ENCODE measurements at regions of chr6 and their contacts with region 1.

Region 1: GRCh38 chr6:31739639-31740396 is at the start of gene MSH5:
- DNase-seq: peak; percentile 98
- H3K4me3 Mint-ChIP-seq: peak within 1 kb of the TSS; percentile 99
- H3K27ac Mint-ChIP-seq: peak within 1 kb of the TSS; percentile 95
- H3K4me1 Mint-ChIP-seq: peaks cover 52% of the 10 kb centered on the region
- H3K27me3 Mint-ChIP-seq: no peaks in the 10 kb centered on the region
- total RNA-seq, gene MSH5: 60.1 to 63.2 TPM

Region 2: GRCh38 chr6:31122791-31123706 is 616.8 kb before region 1 on chr6:
- CTCF ChIA-PET with region 1: no interaction called
- POLR2A ChIA-PET with region 1: no interaction called
- DNase-seq: no peak
- H3K4me3 Mint-ChIP-seq: no peak overlapping the region
- H3K27ac Mint-ChIP-seq: no peak overlapping the region
- H3K4me1 Mint-ChIP-seq: no peaks in the 10 kb centered on the region
- H3K27me3 Mint-ChIP-seq: peaks cover 15% of the 10 kb centered on the region

Region 3: DNA sequence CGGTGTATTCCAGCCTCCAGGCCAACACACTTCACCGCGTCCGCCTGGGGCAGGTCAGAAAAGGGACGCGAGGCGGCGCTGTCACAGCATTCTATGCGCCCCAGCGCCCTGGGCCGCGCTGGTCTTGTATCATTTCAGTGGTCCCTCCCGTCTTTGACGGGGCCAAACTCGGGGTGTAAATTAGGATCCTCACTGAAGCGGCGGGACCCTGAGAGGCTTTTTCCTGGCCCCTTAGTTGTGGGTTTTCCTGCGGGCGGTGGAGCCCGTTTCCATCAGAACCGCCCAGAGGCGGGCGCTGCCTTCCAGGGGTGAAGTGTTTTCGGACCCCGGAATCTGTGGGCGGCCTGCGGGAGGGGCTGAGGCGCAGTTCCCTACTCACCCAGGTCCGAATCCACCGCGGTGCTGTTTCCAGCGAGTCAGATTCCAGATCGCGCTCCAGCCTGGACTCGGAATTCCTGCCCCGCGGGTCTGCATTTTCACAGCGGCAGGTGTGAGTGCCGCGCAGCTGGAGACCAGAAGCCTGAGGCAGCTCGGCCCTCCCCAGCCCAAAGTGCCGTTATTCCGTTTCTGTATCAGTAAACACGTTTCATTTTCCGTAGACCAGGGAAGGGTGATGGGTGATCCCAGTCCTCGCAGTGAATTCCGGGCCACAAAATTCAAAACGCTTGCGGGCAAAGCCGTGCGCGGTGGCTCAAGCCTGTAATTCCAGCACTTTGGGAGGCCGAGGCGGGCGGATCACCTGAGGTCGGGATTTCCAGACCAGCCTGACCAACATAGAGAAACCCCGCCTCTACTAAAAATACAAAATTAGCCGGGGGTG is 245.7 kb before region 1 on chr6:
- CTCF ChIA-PET with region 1: interaction called, 3 read pairs
- POLR2A ChIA-PET with region 1: interaction called, 14 read pairs
- DNase-seq: peak; percentile 85
- H3K4me3 Mint-ChIP-seq: peak overlapping the region; percentile 81
- H3K27ac Mint-ChIP-seq: peak overlapping the region; percentile 78
- H3K4me1 Mint-ChIP-seq: peaks cover 60% of the 10 kb centered on the region
- H3K27me3 Mint-ChIP-seq: no peaks in the 10 kb centered on the region

Region 4: GRCh38 chr6:31619805-31620585 is 119.8 kb before region 1 on chr6:
- CTCF ChIA-PET with region 1: interaction called, 3 read pairs
- POLR2A ChIA-PET with region 1: interaction called, 12 read pairs
- DNase-seq: peak; percentile 98
- H3K4me3 Mint-ChIP-seq: peak overlapping the region; percentile 81
- H3K27ac Mint-ChIP-seq: peak overlapping the region; percentile 95
- H3K4me1 Mint-ChIP-seq: peaks cover 50% of the 10 kb centered on the region
- H3K27me3 Mint-ChIP-seq: no peaks in the 10 kb centered on the region

Region 5: GRCh38 chr6:31702819-31703522 is 36.8 kb before region 1 on chr6 and contains the start of gene ABHD16A:
- CTCF ChIA-PET with region 1: interaction called, 18 read pairs
- POLR2A ChIA-PET with region 1: interaction called, 73 read pairs
- DNase-seq: peak; percentile 98
- H3K4me3 Mint-ChIP-seq: peak within 1 kb of the TSS; percentile 98
- H3K27ac Mint-ChIP-seq: peak within 1 kb of the TSS; percentile 95
- H3K4me1 Mint-ChIP-seq: peaks cover 32% of the 10 kb centered on the region
- H3K27me3 Mint-ChIP-seq: no peaks in the 10 kb centered on the region
- total RNA-seq, gene ABHD16A: 53.1 to 55.0 TPM

Region 6: DNA sequence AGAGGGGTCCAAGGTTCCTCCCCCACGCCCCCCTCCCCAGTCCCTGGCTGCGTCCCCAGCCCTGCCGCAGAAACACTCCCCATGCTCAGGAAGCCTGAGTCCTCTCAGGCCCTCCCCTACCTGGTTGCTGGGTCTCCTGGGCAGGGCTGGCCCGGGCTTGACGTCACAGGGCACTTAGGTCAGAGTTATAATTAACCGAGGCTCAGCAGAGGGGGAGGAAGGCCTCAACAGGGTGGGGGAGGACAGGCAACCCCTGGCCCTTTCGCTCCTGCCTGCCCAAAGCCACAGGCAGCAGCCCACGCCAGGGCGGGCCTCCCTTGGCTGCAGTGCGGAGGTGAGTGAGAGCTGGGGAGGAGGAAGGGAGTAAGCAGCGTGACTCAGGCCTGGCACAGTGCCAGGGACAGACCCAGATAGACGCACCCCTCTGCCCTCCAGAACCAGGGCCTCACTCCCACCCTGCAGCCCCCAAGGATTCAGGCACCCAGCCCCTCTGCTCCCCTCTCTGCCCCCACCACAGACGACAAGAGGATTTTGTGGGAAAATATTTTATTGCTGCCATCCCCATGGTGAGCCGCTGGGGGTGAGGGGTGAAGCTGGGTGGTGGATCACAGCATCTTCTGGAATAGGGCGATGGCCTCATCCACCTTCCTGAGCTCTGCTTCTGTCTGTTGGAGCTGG is 37.3 kb after region 1 on chr6 and contains the start of gene VWA7:
- CTCF ChIA-PET with region 1: interaction called, 88 read pairs
- POLR2A ChIA-PET with region 1: interaction called, 103 read pairs
- DNase-seq: peak; percentile 83
- H3K4me3 Mint-ChIP-seq: peak within 1 kb of the TSS; percentile 63
- H3K27ac Mint-ChIP-seq: peak within 1 kb of the TSS; percentile 84
- H3K4me1 Mint-ChIP-seq: peaks cover 43% of the 10 kb centered on the region
- H3K27me3 Mint-ChIP-seq: no peaks in the 10 kb centered on the region
- total RNA-seq, gene VWA7: 11.0 to 12.2 TPM

Region 7: DNA sequence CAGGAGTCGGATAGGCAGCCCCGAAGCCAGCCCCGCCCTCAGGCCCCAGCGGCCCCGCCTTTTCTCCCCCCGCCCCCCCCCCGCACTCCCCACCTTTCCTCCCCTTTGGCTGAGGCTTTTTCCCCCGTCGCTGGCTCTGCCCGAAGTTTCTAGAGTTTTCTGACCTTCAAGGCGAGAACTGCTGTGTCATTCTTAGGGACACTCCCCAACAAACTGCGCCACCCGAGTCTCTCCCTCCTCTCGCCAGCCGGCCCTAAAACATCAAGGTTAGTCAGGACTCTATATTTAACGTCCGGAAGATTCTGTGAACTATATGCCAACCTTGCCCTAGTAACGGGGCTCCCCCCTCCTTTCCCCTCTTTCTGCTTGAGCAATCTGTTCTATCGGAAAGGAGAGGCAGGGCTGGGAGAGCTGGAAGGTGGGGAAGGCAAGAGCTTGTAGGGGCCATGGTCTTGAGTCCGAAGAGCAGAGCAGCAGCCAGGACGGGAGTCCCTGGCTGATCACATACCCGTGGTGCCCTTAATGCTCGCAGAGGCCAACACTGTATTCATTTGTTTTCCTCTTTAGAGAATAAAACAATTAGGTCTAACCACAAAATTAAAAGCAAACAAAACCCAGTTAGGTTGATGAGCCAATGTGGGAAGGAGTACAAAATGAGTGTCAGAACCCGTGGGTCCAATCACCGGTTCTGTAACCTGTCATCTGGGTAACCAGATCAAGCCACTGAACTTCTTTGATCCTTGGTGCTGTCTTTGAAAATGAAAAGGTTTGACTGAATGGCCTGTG is 82.4 kb after region 1 on chr6:
- CTCF ChIA-PET with region 1: interaction called, 6 read pairs
- POLR2A ChIA-PET with region 1: interaction called, 95 read pairs
- DNase-seq: peak; percentile 65
- H3K4me3 Mint-ChIP-seq: peak overlapping the region; percentile 92
- H3K27ac Mint-ChIP-seq: peak overlapping the region; percentile 94
- H3K4me1 Mint-ChIP-seq: peaks cover 67% of the 10 kb centered on the region
- H3K27me3 Mint-ChIP-seq: no peaks in the 10 kb centered on the region

Region 8: GRCh38 chr6:31897612-31898382 is 158.0 kb after region 1 on chr6 and contains the start of gene EHMT2:
- CTCF ChIA-PET with region 1: interaction called, 3 read pairs
- POLR2A ChIA-PET with region 1: interaction called, 10 read pairs
- DNase-seq: peak; percentile 91
- H3K4me3 Mint-ChIP-seq: peak within 1 kb of the TSS; percentile 90
- H3K27ac Mint-ChIP-seq: peak within 1 kb of the TSS; percentile 84
- H3K4me1 Mint-ChIP-seq: peaks cover 49% of the 10 kb centered on the region
- H3K27me3 Mint-ChIP-seq: peaks cover 5% of the 10 kb centered on the region
- total RNA-seq, gene EHMT2: 57.0 to 58.4 TPM

Region 9: GRCh38 chr6:32290886-32291450 is 551.1 kb after region 1 on chr6:
- CTCF ChIA-PET with region 1: no interaction called
- POLR2A ChIA-PET with region 1: no interaction called
- DNase-seq: no peak
- H3K4me3 Mint-ChIP-seq: no peak overlapping the region
- H3K27ac Mint-ChIP-seq: no peak overlapping the region
- H3K4me1 Mint-ChIP-seq: no peaks in the 10 kb centered on the region
- H3K27me3 Mint-ChIP-seq: peaks cover 54% of the 10 kb centered on the region

Measured in activated CD4-positive, alpha-beta memory T cell treated with anti-CD3 and anti-CD28 coated beads, Interleukin-2, amount 10 ng/mL, durations not matched to agents 7 days and 5 days (primary cell).